Transverse colon (tissue), 4 donors: ENCODE measurements at regions of chr4 and their contacts with region 1.

Region 1: DNA sequence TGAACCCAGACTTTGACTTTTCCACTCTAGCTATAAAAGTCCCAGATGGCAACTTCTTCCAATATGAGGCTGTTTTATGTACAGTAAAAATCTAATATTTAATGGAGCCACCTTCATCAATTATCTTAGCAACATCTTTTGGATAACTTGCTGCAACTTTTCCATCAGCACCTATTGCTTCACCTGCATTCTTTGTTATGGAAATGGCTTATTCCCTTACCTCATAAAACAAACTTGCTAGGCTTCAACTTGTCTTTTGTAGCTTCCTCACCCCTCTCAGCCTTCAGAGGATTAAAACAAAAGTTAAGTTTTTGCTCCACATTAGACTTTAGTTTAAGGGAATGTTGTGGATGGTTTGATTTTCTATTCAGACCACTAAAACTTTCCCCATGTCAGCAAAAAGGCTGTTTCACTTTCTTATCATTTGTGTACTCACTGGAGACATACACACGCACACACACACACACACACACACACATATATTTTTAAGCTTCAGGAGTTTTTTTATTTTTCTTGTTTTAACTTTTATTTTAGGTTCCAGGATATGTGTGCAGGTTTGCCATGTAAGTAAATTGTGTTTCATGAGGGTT is 1296.1 kb upstream of the PABPC4L start:
- DNase-seq: no peak
- H3K4me3 ChIP-seq: no peak overlapping the region
- H3K27ac ChIP-seq: no peak overlapping the region
- H3K4me1 ChIP-seq: no peaks in the 10 kb centered on the region
- H3K27me3 ChIP-seq: no peaks in the 10 kb centered on the region
- CTCF ChIP-seq: no peak
- EP300 ChIP-seq: no peak
- POLR2A ChIP-seq: no peak

Region 2: GRCh38 chr4:134585972-134586371 is 911.7 kb before region 1 on chr4:
- in situ Hi-C with region 1: no loop called
- intact Hi-C with region 1: loop called (anchors 5 kb)
- DNase-seq: no peak
- H3K4me3 ChIP-seq: no peak overlapping the region
- H3K27ac ChIP-seq: no peak overlapping the region
- H3K4me1 ChIP-seq: no peaks in the 10 kb centered on the region
- H3K27me3 ChIP-seq: no peaks in the 10 kb centered on the region
- CTCF ChIP-seq: no peak
- EP300 ChIP-seq: no peak
- POLR2A ChIP-seq: no peak

Region 3: GRCh38 chr4:135032670-135033069 is 465.0 kb before region 1 on chr4:
- in situ Hi-C with region 1: no loop called
- intact Hi-C with region 1: no loop called
- DNase-seq: no peak
- H3K4me3 ChIP-seq: no peak overlapping the region
- H3K27ac ChIP-seq: no peak overlapping the region
- H3K4me1 ChIP-seq: no peaks in the 10 kb centered on the region
- H3K27me3 ChIP-seq: no peaks in the 10 kb centered on the region
- CTCF ChIP-seq: no peak
- EP300 ChIP-seq: no peak
- POLR2A ChIP-seq: no peak

Region 4: GRCh38 chr4:135065366-135065765 is 432.3 kb before region 1 on chr4:
- in situ Hi-C with region 1: no loop called
- intact Hi-C with region 1: no loop called
- DNase-seq: no peak
- H3K4me3 ChIP-seq: no peak overlapping the region
- H3K27ac ChIP-seq: no peak overlapping the region
- H3K4me1 ChIP-seq: no peaks in the 10 kb centered on the region
- H3K27me3 ChIP-seq: no peaks in the 10 kb centered on the region
- CTCF ChIP-seq: no peak
- EP300 ChIP-seq: no peak
- POLR2A ChIP-seq: no peak